Lower leg skin (tissue), 4 donors: ENCODE measurements at regions of chr1 and their contacts with region 1.

Region 1: GRCh38 chr1:47985001-47985400 is 12.2 kb downstream of the TRABD2B start:
- DNase-seq: no peak
- H3K4me3 ChIP-seq: no peak overlapping the region
- CTCF ChIP-seq: no peak
- POLR2A ChIP-seq: no peak

Region 2: DNA sequence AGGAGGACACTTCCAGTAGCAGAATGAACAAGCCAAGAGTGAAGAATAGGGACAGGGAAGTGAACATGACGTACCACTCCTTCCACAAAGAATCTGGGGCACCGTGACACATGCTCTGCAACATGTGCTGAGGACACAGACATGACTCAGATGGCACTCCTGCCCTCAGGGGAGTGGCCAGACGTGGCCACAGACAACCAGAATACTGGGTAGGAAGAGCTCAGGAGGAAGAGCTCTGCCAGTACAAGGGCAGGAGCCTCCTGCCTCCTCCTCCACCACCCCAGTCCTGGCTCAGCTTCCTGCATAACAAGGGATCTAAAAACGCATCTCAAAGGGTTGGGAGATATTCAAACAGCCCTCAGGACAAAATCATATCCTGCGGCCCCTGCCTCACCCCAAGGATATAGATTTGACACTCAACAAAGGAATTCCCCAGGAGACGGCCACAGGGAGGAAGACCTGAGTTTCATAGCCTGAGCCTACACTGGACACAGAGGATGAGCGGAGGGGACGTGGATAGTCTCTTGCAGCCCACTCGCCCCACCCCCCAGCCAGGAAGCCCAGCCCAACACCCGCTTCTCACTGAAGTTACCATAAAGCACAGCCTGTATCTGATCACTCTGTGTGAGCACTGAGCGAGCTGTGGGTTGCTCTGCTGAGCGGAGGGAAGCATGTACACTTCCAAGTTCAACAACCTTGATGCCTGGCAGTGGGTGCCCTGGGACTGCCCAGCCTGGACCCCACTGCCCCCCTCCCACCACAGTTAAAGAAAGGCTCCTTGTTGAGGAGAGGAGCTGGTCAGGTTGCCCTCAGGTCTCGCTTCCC is 90.1 kb before region 1 on chr1:
- intact Hi-C with region 1: no loop called
- DNase-seq: peak in 1 of 2 donors; percentile 32
- H3K4me3 ChIP-seq: no peak overlapping the region
- CTCF ChIP-seq: no peak
- POLR2A ChIP-seq: no peak

Region 3: DNA sequence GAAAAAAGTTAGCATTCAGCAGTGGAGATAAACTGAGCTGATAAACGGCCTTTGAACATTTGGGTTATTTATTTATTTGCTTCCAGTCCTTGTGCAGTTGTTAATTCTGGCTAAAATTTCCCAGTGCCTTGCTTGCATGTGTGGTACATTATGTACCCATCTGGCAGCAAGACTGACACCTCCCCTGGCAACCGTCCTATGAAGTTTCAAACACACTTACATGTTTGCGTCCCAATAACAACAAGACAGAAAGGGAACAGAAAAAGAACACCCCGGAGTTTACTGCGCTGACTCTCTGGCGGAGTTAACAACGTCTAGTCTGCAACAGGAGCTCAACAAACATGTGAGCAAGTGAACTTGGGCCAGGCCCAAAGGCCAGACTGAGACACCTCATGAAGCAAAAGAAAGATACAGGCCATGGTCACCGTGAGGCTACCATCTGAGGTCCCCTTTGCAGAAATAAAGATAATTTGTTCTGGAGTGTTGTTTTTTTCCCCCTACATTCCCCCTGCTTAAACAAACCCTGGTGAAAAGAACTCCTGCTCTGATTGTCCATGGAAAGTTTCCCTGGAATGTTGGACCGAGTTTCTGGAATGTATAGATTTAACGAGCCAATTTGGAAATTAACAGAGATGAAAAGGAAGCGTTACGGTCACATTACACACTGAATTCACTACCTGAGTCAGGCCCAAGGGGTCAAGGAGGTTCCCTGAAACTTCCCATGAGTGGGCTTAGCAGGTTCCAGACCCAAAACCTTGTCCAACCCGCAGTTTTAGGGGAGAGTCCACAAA is 21.2 kb before region 1 on chr1:
- intact Hi-C with region 1: loop called (anchors 1 kb)
- DNase-seq: peak; percentile 49 to 81
- H3K4me3 ChIP-seq: no peak overlapping the region
- CTCF ChIP-seq: no peak
- POLR2A ChIP-seq: no peak